Mammary epithelial cell (primary cell): ENCODE measurements at regions of chr16 and their contacts with region 1.

Region 1: GRCh38 chr16:22813223-22813945 is 578 bp upstream of the HS3ST2 start:
- DNase-seq: peak; percentile 93
- H3K4me3 ChIP-seq: peak overlapping the region; percentile 61 to 76 (median 76)
- H3K27ac ChIP-seq: peak overlapping the region; percentile 82
- H3K4me1 ChIP-seq: peaks cover 34% of the 10 kb centered on the region
- H3K27me3 ChIP-seq: no peaks in the 10 kb centered on the region
- CTCF ChIP-seq: peak; percentile 81 to 96

Region 2: GRCh38 chr16:22641131-22641628 is 172.2 kb before region 1 on chr16:
- CTCF ChIA-PET with region 1: no interaction called
- dilution Hi-C with region 1: no loop called
- in situ Hi-C with region 1: no loop called
- intact Hi-C with region 1: loop called (anchors 2 kb)
- DNase-seq: peak; percentile 60
- H3K4me3 ChIP-seq: no peak overlapping the region
- H3K27ac ChIP-seq: no peak overlapping the region
- H3K4me1 ChIP-seq: peaks cover 13% of the 10 kb centered on the region
- H3K27me3 ChIP-seq: peaks cover under 1% of the 10 kb centered on the region
- CTCF ChIP-seq: no peak

Region 3: DNA sequence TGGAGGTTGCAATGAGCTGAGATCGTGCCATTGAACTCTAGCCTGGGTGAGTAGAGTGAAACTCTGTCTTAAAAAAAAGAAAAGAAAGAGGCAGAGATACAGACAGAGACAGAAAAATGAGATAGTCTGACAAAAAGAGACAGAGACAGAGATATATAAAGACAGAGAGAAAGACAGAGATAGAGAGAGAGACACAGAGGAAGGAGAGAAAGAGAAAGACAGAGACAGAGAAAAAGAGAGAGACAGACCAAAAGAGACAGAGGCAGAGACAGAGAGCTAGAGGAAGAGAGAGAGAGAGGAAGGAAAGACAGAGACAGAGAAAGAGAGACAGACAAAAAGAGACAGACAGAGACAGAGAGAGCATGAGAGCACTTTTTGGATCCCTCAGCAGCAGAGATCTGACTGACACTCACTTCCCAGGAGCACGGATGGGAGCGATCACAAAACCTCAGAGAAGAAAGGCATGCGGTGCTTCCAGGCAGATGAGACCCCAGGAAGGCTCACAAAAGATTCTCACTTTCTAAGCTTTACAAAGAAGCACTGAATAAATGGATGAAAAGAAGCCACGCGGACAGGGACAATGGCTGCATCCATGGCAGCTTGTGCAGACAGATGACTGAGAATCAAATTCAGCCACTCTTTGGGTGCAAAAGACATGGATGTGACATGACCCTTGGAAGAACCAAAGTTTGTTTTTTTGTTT is 38.0 kb before region 1 on chr16:
- CTCF ChIA-PET with region 1: no interaction called
- dilution Hi-C with region 1: loop called (anchors 5 kb)
- in situ Hi-C with region 1: no loop called
- intact Hi-C with region 1: no loop called
- DNase-seq: no peak
- H3K4me3 ChIP-seq: no peak overlapping the region
- H3K27ac ChIP-seq: no peak overlapping the region
- H3K4me1 ChIP-seq: peaks cover 12% of the 10 kb centered on the region
- H3K27me3 ChIP-seq: no peaks in the 10 kb centered on the region
- CTCF ChIP-seq: no peak

Region 4: GRCh38 chr16:22789281-22789945 is 24.0 kb before region 1 on chr16:
- CTCF ChIA-PET with region 1: no interaction called
- dilution Hi-C with region 1: no loop called
- in situ Hi-C with region 1: no loop called
- intact Hi-C with region 1: loop called (anchors 1 kb)
- DNase-seq: peak; percentile 78
- H3K4me3 ChIP-seq: no peak overlapping the region
- H3K27ac ChIP-seq: peak overlapping the region; percentile 44
- H3K4me1 ChIP-seq: peaks cover 44% of the 10 kb centered on the region
- H3K27me3 ChIP-seq: no peaks in the 10 kb centered on the region
- CTCF ChIP-seq: no peak

Region 5: GRCh38 chr16:22948603-22949368 is 135.4 kb after region 1 on chr16:
- CTCF ChIA-PET with region 1: no interaction called
- dilution Hi-C with region 1: no loop called
- in situ Hi-C with region 1: no loop called
- intact Hi-C with region 1: loop called (anchors 1 kb)
- DNase-seq: peak; percentile 73
- H3K4me3 ChIP-seq: no peak overlapping the region
- H3K27ac ChIP-seq: no peak overlapping the region
- H3K4me1 ChIP-seq: peaks cover 8% of the 10 kb centered on the region
- H3K27me3 ChIP-seq: no peaks in the 10 kb centered on the region
- CTCF ChIP-seq: peak; percentile 84 to 90

Region 6: DNA sequence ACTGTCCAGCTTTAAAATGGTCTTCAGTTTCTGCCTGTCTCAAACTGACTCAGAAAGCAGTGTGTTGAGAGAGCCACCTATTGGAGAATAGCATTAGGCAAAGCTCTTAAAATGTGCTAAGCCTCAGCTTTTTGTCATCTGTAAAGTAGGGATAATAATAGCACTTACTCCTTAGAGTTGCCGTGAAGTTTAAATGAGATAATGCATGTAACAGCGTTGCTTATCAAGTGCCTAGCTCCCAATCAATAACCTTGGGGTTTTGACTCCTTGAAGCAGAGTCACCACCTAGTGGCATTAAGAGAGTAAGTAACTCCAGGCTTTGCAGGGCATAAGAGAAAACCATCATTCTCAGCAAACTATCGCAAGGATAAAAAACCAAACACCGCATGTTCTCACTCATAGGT is 163.9 kb after region 1 on chr16:
- CTCF ChIA-PET with region 1: no interaction called
- dilution Hi-C with region 1: no loop called
- in situ Hi-C with region 1: no loop called
- intact Hi-C with region 1: loop called (anchors 10 kb)
- DNase-seq: peak; percentile 8
- H3K4me3 ChIP-seq: no peak overlapping the region
- H3K27ac ChIP-seq: no peak overlapping the region
- H3K4me1 ChIP-seq: no peaks in the 10 kb centered on the region
- H3K27me3 ChIP-seq: no peaks in the 10 kb centered on the region
- CTCF ChIP-seq: peak; percentile 40 to 58

Region 7: GRCh38 chr16:23072084-23072599 is 258.8 kb after region 1 on chr16:
- CTCF ChIA-PET with region 1: no interaction called
- dilution Hi-C with region 1: no loop called
- in situ Hi-C with region 1: no loop called
- intact Hi-C with region 1: loop called (anchors 5 kb)
- DNase-seq: peak; percentile 82
- H3K4me3 ChIP-seq: no peak overlapping the region
- H3K27ac ChIP-seq: peak overlapping the region; percentile 93
- H3K4me1 ChIP-seq: peaks cover 36% of the 10 kb centered on the region
- H3K27me3 ChIP-seq: no peaks in the 10 kb centered on the region
- CTCF ChIP-seq: no peak